WTC11 (cell line): ENCODE measurements at regions of chr2 and their contacts with region 1.

Region 1: DNA sequence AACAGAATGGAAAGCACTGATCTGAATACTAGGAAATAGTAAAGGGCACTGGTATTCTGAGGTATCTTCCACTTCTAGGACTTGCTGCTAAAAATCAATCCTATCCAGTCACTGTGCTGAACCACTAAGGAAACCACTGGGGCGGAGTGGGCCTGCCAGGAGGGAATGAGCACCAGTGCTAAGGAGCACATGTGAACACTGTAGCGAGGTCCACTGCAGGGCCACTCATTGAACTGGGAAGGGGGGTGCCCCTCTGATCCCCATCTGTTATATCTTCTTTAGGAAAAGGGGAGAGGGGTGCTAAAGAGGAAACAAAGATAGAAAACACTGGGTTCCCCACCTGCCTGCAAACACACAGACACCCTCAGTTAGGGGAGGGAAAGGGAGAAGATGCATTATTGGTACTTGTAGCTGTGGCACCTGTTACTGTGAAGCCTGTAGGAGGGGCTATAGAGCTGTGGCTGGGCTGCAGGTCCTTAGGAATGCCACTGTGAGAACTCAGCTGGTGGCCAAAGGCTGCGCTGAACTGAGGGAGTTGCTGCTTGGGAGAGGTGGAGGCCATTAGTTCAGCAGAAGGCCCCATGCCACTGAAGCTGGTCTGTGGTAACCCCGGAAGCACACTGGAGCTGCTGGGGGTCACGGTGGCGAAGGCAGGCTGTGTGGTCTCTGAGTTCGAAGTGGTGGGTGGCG is 81.8 kb downstream of the INO80D start:
- DNase-seq: peak; percentile 72
- ATAC-seq: peak; percentile 99
- H3K4me3 Mint-ChIP-seq: no peak overlapping the region
- H3K27ac Mint-ChIP-seq: peak overlapping the region; percentile 38; the same call in 1 of the 2 replicates
- H3K4me1 Mint-ChIP-seq: no peaks in the 10 kb centered on the region; the same call in 1 of the 2 replicates
- H3K27me3 Mint-ChIP-seq: no peaks in the 10 kb centered on the region
- CTCF ChIP-seq: peak; percentile 45

Region 2: GRCh38 chr2:205908212-205909183 is 95.7 kb before region 1 on chr2:
- CTCF ChIA-PET with region 1: no interaction called
- POLR2A ChIA-PET with region 1: no interaction called
- DNase-seq: no peak
- ATAC-seq: no peak
- H3K4me3 Mint-ChIP-seq: no peak overlapping the region
- H3K27ac Mint-ChIP-seq: no peak overlapping the region
- H3K4me1 Mint-ChIP-seq: no peaks in the 10 kb centered on the region
- H3K27me3 Mint-ChIP-seq: peaks cover 2% of the 10 kb centered on the region; the same call in 1 of the 2 replicates
- CTCF ChIP-seq: no peak

Region 3: GRCh38 chr2:205957452-205958154 is 46.5 kb before region 1 on chr2:
- CTCF ChIA-PET with region 1: no interaction called
- POLR2A ChIA-PET with region 1: no interaction called
- DNase-seq: no peak
- ATAC-seq: peak; percentile 92
- H3K4me3 Mint-ChIP-seq: no peak overlapping the region; the same call in 1 of the 2 replicates
- H3K27ac Mint-ChIP-seq: no peak overlapping the region
- H3K4me1 Mint-ChIP-seq: peaks cover 29% of the 10 kb centered on the region
- H3K27me3 Mint-ChIP-seq: no peaks in the 10 kb centered on the region; the same call in none of the 2 replicates
- CTCF ChIP-seq: no peak

Region 4: DNA sequence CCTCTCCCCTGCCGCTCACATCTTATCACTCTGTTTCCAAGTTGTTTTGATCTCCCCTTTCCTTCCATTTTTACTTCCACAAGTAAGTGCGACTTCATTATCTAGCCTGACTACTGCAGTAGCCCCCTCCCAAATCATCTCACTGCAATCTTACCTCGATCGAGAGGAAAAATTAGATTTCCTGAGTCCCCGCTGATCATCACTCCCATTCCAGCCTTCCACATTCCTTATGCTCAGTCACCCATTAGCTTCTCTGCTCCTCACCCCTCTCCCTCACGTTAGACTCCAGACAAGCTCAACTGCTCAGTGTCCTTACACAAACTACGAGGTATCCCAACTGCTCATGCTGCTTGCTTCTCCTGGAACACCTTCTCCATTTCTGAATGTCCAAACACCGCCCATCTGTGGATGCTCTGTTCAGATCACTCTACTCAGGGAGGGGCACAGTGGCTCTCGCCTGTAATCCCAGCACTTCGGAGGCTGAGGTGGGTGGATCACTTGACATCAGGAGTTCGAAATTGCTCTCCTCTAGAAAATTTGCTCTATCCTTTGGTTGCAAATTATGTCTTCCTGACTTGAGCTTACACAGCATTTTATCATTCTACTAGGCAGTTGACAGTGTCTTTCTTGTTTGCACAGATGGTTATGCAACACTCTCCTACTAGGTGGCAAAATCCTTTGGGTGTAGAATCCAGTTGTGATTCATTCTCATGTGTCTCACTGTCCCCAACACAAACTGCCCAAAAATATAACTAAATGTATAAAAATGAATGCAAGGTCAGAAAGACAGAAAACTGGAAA is 14.7 kb before region 1 on chr2:
- CTCF ChIA-PET with region 1: interaction called, 10 read pairs
- POLR2A ChIA-PET with region 1: no interaction called
- DNase-seq: no peak
- ATAC-seq: peak; percentile 43; the same call in 1 of the 2 replicates
- H3K4me3 Mint-ChIP-seq: no peak overlapping the region
- H3K27ac Mint-ChIP-seq: no peak overlapping the region; the same call in 1 of the 2 replicates
- H3K4me1 Mint-ChIP-seq: peaks cover 6% of the 10 kb centered on the region
- H3K27me3 Mint-ChIP-seq: no peaks in the 10 kb centered on the region
- CTCF ChIP-seq: no peak

Region 5: DNA sequence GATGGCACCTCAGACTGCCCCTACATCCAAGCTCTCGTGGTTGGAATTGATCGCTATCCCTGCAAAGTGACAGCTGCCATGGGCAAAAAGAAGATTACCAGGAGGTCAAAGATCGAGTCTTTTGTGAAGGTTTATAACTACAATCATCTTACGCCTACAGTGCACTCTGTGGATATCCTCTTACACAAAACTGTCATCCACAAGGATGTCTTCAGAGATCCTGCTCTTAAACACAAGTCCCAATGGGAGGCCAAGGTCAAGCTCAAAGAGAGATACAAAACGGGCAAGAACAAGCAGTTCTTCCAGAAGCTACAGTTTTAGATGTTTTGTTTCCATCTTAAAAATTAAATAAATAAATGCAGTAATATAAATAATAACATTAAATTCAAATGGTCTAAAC is 36.4 kb after region 1 on chr2:
- CTCF ChIA-PET with region 1: no interaction called
- POLR2A ChIA-PET with region 1: no interaction called
- DNase-seq: no peak
- ATAC-seq: no peak
- H3K4me3 Mint-ChIP-seq: no peak overlapping the region
- H3K27ac Mint-ChIP-seq: peak overlapping the region; percentile 87
- H3K4me1 Mint-ChIP-seq: peaks cover 8% of the 10 kb centered on the region
- H3K27me3 Mint-ChIP-seq: no peaks in the 10 kb centered on the region
- CTCF ChIP-seq: no peak

Region 6: GRCh38 chr2:206154197-206154596 is 150.0 kb after region 1 on chr2:
- CTCF ChIA-PET with region 1: interaction called, 16 read pairs
- POLR2A ChIA-PET with region 1: interaction called, 4 read pairs
- DNase-seq: no peak
- ATAC-seq: peak; percentile 53
- H3K4me3 Mint-ChIP-seq: no peak overlapping the region
- H3K27ac Mint-ChIP-seq: 0 out of 2 replicates have a peak overlapping the region, but pooled peaks have one; percentile 47
- H3K4me1 Mint-ChIP-seq: peaks cover 14% of the 10 kb centered on the region
- H3K27me3 Mint-ChIP-seq: no peaks in the 10 kb centered on the region
- CTCF ChIP-seq: no peak